ENCODE measurements at regions of chr11 and their contacts with region 1.

Region 1: DNA sequence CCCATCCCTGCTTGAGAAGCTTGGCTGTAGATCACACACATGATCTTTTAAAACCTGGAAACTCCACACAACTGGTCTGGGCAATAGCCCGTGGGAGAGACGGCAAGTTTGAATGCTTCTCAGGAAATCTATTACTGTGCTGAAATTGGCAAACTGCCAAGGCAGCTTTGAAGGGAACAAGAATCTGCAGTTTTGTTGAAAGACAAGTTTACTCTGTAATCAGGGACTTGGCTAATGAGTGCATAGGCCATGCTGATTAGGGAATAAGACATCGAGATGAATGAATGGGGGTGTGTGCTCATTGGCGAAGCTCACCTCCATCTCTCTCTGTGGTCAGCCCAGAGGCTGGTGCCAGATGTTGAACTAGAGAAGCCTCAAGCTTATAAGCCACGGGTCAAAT is 218.8 kb downstream of the HIPK3 start:
- DNase-seq: no peak
- H3K4me3 ChIP-seq: no peak overlapping the region
- H3K27ac ChIP-seq: no peak overlapping the region
- H3K4me1 ChIP-seq: no peaks in the 10 kb centered on the region
- H3K27me3 ChIP-seq: peaks cover 0 to 14% (median 0%) of the 10 kb centered on the region in 4 donors
- CTCF ChIP-seq: no peak
- EP300 ChIP-seq: no peak
- POLR2A ChIP-seq: no peak

Region 2: DNA sequence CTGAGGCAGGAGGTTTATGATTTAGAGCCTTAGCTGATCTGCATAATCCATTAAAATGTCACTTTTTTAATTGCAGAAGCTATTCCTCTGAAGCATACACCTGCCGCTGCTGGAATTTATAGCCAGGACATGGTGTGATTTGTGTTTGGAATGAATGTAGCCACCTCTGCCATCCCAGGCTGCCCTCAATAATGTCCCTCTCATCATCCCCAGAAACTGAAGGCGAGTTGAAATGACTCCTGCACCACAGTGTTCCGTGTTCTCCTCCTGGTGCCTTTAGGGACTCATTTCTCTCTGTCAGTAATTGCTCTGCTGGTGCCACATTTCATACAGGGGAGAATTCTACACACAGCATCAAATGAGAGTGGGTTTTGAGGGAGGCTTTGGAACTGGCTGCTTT is 33.6 kb after region 1 on chr11:
- intact Hi-C with region 1: loop called (anchors 2 kb)
- DNase-seq: peak; percentile 64
- H3K4me3 ChIP-seq: no peak overlapping the region
- H3K27ac ChIP-seq: no peak overlapping the region
- H3K4me1 ChIP-seq: no peaks in the 10 kb centered on the region
- H3K27me3 ChIP-seq: peaks cover 0 to 12% (median 0%) of the 10 kb centered on the region in 4 donors
- CTCF ChIP-seq: no peak
- EP300 ChIP-seq: no peak
- POLR2A ChIP-seq: no peak

Region 3: GRCh38 chr11:33642461-33643166 is 166.6 kb after region 1 on chr11:
- intact Hi-C with region 1: no loop called
- DNase-seq: no peak
- H3K4me3 ChIP-seq: no peak overlapping the region
- H3K27ac ChIP-seq: no peak overlapping the region
- H3K4me1 ChIP-seq: no peaks in the 10 kb centered on the region
- H3K27me3 ChIP-seq: peaks cover 0 to 15% (median 0%) of the 10 kb centered on the region in 4 donors
- CTCF ChIP-seq: no peak
- EP300 ChIP-seq: no peak
- POLR2A ChIP-seq: no peak

Region 4: DNA sequence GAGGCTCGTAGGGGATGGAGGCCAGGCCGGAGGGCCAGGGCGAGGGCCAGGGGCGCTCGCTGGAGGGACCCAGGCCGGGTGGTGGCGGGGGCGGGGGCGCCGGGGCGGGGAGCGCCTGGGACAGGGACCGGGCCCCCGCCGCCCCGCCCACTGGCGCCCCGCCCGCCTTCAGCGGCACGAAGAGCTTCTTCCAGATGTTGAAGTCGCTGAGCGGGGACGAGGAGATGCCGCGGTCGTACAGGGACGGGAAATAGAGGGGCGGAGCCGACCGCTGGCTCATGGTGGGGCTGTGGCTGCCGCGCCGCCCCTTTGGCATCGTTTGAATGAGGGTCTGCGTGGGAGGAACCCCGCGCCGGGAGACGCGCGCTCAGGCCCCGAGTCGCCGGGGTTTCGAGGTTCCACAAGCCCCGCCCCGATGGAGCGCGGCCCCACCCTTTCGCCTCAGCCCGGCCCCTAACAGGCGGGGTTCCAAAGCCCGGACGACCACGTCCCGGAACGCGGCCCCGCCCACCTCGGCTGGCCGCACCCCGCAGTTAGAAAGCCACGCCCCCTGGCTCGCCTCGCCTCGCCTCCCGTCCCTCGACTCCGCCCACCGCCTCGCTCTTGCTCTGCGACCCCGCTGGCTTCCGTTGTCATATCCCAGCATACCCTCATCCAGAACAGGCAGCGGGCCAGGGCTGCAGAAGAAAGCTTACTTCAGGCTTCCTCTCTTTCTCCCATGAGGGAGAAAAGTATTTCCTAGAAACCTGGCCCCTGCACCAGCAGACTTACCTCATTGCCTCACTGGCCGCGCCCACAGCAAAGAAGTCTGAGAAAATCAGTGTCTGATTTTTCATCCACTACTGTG is 224.7 kb after region 1 on chr11 and contains the start of gene C11orf91:
- intact Hi-C with region 1: no loop called
- DNase-seq: peak; percentile 98
- H3K4me3 ChIP-seq: peak within 1 kb of the TSS; percentile 61 to 67 (median 62)
- H3K27ac ChIP-seq: peak within 1 kb of the TSS; percentile 67 to 79 (median 79)
- H3K4me1 ChIP-seq: peaks cover 55 to 62% (median 57%) of the 10 kb centered on the region in 4 donors
- H3K27me3 ChIP-seq: no peaks in the 10 kb centered on the region
- CTCF ChIP-seq: no peak
- EP300 ChIP-seq: no peak
- POLR2A ChIP-seq: no peak
- total RNA-seq, gene C11orf91: not detected